Psoas muscle (tissue), 8 donors: ENCODE measurements at regions of chr7 and their contacts with region 1.

Region 1: DNA sequence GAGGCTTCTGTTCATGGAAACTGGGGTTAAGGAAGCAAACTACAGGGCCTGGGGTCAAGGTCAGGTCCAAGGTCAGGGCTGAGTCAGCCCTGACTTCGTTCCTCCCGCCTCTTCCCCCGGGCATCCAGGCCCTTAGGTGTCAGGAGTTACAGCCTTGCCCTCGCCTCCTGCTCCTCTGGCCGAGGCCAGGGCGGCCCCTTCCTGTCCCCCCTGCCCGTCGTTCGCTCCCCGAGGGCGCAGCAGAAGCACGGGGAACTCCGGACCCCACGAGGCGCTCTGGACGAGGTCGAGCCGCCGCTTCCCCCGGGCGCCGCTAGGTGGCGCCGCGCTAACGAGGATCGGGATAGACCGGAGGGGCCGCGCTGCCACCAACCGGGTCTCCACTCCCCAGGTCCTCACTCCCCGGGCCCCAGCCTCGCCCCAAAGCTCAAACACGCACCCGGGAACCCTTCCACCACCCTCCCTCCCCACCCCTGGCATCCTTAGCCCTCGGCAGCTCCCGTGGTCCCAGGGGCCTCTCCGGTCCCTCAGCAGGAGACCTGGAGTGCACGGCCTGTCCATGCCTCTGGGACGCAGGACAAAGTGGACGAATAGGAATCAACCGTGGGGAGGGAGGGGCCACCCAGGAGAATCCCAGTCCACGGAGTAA is 59.2 kb upstream of the MYL10 start:
- DNase-seq: peak; percentile 82 to 89
- ATAC-seq: peak; percentile 87 to 98 (median 92)
- H3K4me3 ChIP-seq: peak overlapping the region; percentile 49
- H3K27ac ChIP-seq: no peak overlapping the region
- H3K4me1 ChIP-seq: no peaks in the 10 kb centered on the region
- H3K27me3 ChIP-seq: no peaks in the 10 kb centered on the region
- CTCF ChIP-seq: peak; percentile 95

Region 2: DNA sequence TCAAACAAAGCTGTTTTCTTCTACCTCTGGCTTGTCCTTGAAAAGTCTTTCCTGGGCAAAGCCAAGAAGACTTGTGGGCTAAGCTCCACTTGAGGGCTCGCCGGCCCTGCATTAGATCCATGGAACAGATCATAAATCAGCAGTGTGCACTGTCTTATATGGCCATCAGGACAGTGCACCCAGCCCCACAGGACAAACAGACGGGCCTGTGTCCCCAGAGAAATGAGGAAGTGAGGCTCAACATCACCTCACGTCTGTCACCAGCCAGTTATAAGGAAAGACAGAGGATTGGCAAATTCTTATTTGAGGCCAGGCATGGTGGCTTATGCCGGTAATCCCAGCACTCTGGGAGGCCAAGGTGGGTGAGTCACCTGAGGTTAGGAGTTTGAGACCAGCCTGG is 354.4 kb before region 1 on chr7:
- intact Hi-C with region 1: no loop called
- DNase-seq: no peak
- ATAC-seq: no peak
- H3K4me3 ChIP-seq: no peak overlapping the region
- H3K27ac ChIP-seq: no peak overlapping the region
- H3K4me1 ChIP-seq: no peaks in the 10 kb centered on the region
- H3K27me3 ChIP-seq: peaks cover 0 to 14% (median 7%) of the 10 kb centered on the region in 3 donors
- CTCF ChIP-seq: no peak

Region 3: DNA sequence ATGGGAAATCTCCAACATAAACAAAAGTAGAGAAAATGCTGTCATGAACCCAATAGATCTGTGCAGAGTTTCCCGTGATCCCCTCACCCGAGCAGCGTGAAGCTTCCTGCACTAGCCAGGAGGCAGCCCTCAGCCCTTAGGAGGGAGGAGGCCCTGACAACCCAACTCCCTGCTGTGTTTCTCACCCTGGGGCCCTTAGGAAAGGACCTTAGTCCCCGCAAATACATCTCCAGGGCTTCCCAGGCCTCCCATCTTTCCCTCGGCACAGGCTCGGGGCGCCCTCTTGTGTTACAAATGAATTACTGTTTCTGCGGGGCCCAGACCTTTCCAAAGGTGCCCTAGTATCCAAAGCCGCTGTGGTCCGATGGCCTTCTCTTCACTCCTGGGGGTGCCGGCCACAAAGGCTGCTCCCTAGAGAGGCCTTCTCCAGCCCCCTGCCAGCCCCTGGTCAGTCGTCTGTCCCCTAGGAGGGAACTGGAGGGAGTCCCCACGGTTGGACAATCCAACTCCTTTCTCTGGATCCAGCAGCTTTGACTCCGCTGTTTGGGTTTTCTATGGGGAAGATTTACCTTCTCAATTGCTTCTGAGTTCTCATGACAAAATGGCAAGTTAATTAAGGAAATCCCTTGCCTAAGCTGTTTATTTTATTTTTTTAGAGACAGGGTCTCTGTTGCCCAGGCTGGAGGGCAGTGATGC is 548.4 kb after region 1 on chr7:
- intact Hi-C with region 1: loop called (anchors 5 kb)
- DNase-seq: peak; percentile 47 to 72
- ATAC-seq: peak; percentile 71 to 94 (median 84)
- H3K4me3 ChIP-seq: no peak overlapping the region
- H3K27ac ChIP-seq: no peak overlapping the region
- H3K4me1 ChIP-seq: no peaks in the 10 kb centered on the region
- H3K27me3 ChIP-seq: no peaks in the 10 kb centered on the region
- CTCF ChIP-seq: peak; percentile 78

Region 4: DNA sequence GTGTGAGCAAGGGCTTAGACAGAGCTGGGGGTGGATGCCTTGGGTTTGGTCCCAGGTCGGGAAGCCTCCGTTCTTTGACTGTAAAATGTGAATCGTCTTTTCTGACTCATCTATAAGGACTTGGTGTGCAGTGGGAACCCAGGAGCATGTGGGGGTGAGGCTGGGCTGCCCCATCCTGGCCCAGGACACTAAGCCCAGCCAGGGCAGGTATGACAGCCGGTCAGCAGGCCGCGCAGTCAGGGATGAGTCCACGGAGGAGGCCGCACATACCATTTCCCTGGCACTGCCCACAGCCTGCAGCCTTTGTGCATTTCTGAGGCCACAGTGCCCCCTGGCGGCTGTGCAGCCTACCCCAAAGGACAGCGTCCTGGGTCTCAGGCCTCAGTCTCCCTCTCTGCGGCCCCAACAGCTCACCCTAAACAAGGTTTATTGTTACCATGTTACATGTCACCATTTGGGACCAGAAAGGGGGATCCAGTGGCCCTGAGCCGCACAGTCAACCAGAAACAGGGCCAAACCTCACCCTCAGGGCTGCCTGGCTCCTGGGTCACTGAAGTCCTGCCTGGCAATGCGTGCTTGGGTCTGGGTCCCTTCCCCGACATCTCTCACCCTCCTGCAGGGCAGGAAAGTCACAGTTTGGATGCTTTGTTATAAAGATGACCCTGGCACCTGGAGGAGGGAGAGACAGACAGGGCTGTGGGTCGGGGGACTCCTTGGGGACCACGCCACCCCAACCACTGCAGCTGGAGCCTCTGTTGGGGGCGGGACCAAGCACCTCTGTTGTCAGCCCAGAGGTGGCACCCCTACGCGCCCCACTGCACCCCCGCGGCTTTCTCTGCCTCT is 584.0 kb after region 1 on chr7:
- intact Hi-C with region 1: loop called (anchors 2 to 5 kb)
- DNase-seq: peak; percentile 83 to 91
- ATAC-seq: peak; percentile 93 to 97 (median 96)
- H3K4me3 ChIP-seq: no peak overlapping the region
- H3K27ac ChIP-seq: no peak overlapping the region
- H3K4me1 ChIP-seq: no peaks in the 10 kb centered on the region
- H3K27me3 ChIP-seq: no peaks in the 10 kb centered on the region
- CTCF ChIP-seq: peak; percentile 95